HCT116 (cell line): ENCODE measurements at regions of chr14 and their contacts with region 1.

Region 1: GRCh38 chr14:39102969-39103957 is at the start of gene SEC23A:
- DNase-seq: peak; percentile 47
- ATAC-seq: peak; percentile 92
- H3K4me3 ChIP-seq: peak within 1 kb of the TSS; percentile 73 to 78
- H3K27ac ChIP-seq: peak within 1 kb of the TSS; percentile 79
- H3K4me1 ChIP-seq: peaks cover 6 to 21% of the 10 kb centered on the region in 2 experiments; a peak in 2 of 4 replicates
- H3K27me3 ChIP-seq: no peaks in the 10 kb centered on the region
- CTCF ChIP-seq: no peak
- POLR2A ChIP-seq: peak; percentile 55
- RAD21 ChIP-seq: no peak
- total RNA-seq, gene SEC23A: 81.7 TPM

Region 2: DNA sequence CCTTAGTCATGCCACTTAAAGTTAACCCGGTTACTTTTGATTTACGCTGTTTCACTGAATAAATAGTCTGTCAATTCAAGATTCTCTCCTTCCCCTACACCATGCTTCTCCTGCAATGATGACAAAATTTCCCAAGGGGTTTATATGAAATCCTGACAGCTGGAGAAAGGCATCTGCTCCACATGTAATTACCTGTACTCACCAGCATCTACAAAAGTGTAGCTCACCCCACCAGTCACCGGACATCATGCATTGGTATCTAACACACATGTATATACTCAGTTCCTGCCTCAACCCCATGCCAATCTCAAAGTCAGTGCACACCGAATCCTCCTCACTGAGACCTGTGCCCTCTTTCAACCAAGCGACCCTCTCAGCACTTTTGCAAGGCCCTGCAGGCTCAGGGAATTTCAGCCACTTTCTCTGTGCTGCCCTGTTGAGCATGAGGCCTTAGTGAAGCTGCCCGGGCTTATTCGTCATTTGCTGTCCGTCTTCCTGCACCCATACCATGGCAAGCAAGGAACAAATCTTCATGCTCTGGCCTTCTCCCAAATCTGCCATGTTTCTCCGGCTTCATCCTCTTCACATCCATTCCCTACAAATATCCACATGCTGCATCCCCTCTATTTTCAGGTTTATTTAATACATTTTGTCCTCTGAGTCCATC is 131.9 kb before region 1 on chr14:
- CTCF ChIA-PET with region 1: no interaction called
- POLR2A ChIA-PET with region 1: no interaction called
- RAD21 ChIA-PET with region 1: no interaction called
- intact Hi-C with region 1: no loop called
- DNase-seq: no peak
- ATAC-seq: no peak; the same call in 1 of the 2 replicates
- H3K4me3 ChIP-seq: no peak overlapping the region
- H3K27ac ChIP-seq: no peak overlapping the region
- H3K4me1 ChIP-seq: no peaks in the 10 kb centered on the region
- H3K27me3 ChIP-seq: no peaks in the 10 kb centered on the region
- CTCF ChIP-seq: 0 out of 6 replicates have a peak, but pooled peaks of 1 of the 3 experiments have one; percentile 13
- POLR2A ChIP-seq: no peak
- RAD21 ChIP-seq: no peak

Region 3: GRCh38 chr14:39015360-39015961 is 87.8 kb before region 1 on chr14:
- CTCF ChIA-PET with region 1: no interaction called
- POLR2A ChIA-PET with region 1: no interaction called
- RAD21 ChIA-PET with region 1: no interaction called
- intact Hi-C with region 1: no loop called
- DNase-seq: peak; percentile 28
- ATAC-seq: peak; percentile 62
- H3K4me3 ChIP-seq: no peak overlapping the region
- H3K27ac ChIP-seq: no peak overlapping the region
- H3K4me1 ChIP-seq: no peaks in the 10 kb centered on the region
- H3K27me3 ChIP-seq: no peaks in the 10 kb centered on the region
- CTCF ChIP-seq: peak; percentile 39 to 85 (median 83); a peak in 5 of 6 replicates
- POLR2A ChIP-seq: no peak
- RAD21 ChIP-seq: peak; percentile 58

Region 4: GRCh38 chr14:39060818-39061437 is 42.3 kb before region 1 on chr14:
- CTCF ChIA-PET with region 1: no interaction called
- POLR2A ChIA-PET with region 1: no interaction called
- RAD21 ChIA-PET with region 1: no interaction called
- intact Hi-C with region 1: no loop called
- DNase-seq: no peak
- ATAC-seq: no peak
- H3K4me3 ChIP-seq: no peak overlapping the region
- H3K27ac ChIP-seq: no peak overlapping the region
- H3K4me1 ChIP-seq: no peaks in the 10 kb centered on the region
- H3K27me3 ChIP-seq: no peaks in the 10 kb centered on the region
- CTCF ChIP-seq: no peak
- POLR2A ChIP-seq: no peak
- RAD21 ChIP-seq: no peak

Region 5: DNA sequence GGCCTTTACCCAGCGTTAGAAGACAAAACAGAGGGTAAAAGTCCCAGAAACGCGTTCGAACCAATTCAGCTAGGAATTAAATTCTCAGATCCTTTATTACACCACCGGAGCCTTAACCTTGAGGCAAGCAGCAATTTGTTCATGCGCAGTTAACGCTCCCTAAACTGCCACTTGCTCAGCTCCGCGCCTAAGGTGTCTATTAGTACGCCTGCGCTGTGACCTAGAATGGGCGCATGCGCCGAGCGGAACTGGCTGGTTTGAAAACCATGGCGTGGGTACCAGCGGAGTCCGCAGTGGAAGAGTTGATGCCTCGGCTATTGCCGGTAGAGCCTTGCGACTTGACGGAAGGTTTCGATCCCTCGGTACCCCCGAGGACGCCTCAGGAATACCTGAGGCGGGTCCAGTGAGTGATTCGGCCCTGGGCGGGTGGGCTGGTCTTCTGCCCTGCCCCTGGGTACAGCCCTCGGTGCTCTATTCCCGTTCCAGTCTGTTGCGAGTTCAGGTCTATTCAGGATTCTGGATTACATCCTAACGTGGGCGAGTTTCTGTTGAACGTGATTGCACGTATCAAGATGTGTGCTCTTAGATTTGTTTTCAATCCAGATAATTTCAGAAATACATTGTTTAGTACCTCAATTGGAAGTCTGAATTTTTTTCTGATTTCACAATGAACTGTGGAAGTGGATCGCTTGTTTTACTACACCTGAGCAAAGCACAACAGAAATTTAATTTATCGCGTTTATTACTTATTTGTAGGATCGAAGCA is 11.0 kb after region 1 on chr14 and contains the start of gene GEMIN2:
- CTCF ChIA-PET with region 1: interaction called, 4 read pairs
- POLR2A ChIA-PET with region 1: interaction called, 19 read pairs
- RAD21 ChIA-PET with region 1: interaction called in 1 of 2 experiments, 4 read pairs
- intact Hi-C with region 1: no loop called
- DNase-seq: peak; percentile 88
- ATAC-seq: peak; percentile 97
- H3K4me3 ChIP-seq: peak within 1 kb of the TSS; percentile 65 to 84
- H3K27ac ChIP-seq: peak within 1 kb of the TSS; percentile 63
- H3K4me1 ChIP-seq: peaks cover 4 to 16% of the 10 kb centered on the region in 2 experiments; a peak in 3 of 4 replicates
- H3K27me3 ChIP-seq: no peaks in the 10 kb centered on the region
- CTCF ChIP-seq: no peak
- POLR2A ChIP-seq: peak; percentile 96
- RAD21 ChIP-seq: no peak
- total RNA-seq, gene GEMIN2: 27.3 TPM

Region 6: GRCh38 chr14:39368261-39368959 is 265.1 kb after region 1 on chr14:
- CTCF ChIA-PET with region 1: interaction called, 3 read pairs
- POLR2A ChIA-PET with region 1: no interaction called
- RAD21 ChIA-PET with region 1: interaction called in 1 of 2 experiments, 3 read pairs
- intact Hi-C with region 1: loop called (anchors 1 kb)
- DNase-seq: peak; percentile 44
- ATAC-seq: peak; percentile 72
- H3K4me3 ChIP-seq: no peak overlapping the region
- H3K27ac ChIP-seq: no peak overlapping the region
- H3K4me1 ChIP-seq: no peaks in the 10 kb centered on the region
- H3K27me3 ChIP-seq: no peaks in the 10 kb centered on the region
- CTCF ChIP-seq: peak; percentile 52 to 67 (median 62); a peak in 5 of 6 replicates
- POLR2A ChIP-seq: no peak
- RAD21 ChIP-seq: peak; percentile 84

Region 7: GRCh38 chr14:39426605-39427004 is 323.3 kb after region 1 on chr14:
- CTCF ChIA-PET with region 1: interaction called, 3 read pairs
- POLR2A ChIA-PET with region 1: no interaction called
- RAD21 ChIA-PET with region 1: no interaction called
- intact Hi-C with region 1: loop called (anchors 1 kb)
- DNase-seq: no peak
- ATAC-seq: no peak
- H3K4me3 ChIP-seq: no peak overlapping the region
- H3K27ac ChIP-seq: no peak overlapping the region
- H3K4me1 ChIP-seq: peaks cover 8 to 14% of the 10 kb centered on the region in 2 experiments
- H3K27me3 ChIP-seq: no peaks in the 10 kb centered on the region
- CTCF ChIP-seq: peak in 2 of 3 experiments; percentile 25 to 31; a peak in 3 of 6 replicates
- POLR2A ChIP-seq: no peak
- RAD21 ChIP-seq: peak; percentile 58